Mammary epithelial cell (primary cell): ENCODE measurements at regions of chr1 and their contacts with region 1.

Region 1: DNA sequence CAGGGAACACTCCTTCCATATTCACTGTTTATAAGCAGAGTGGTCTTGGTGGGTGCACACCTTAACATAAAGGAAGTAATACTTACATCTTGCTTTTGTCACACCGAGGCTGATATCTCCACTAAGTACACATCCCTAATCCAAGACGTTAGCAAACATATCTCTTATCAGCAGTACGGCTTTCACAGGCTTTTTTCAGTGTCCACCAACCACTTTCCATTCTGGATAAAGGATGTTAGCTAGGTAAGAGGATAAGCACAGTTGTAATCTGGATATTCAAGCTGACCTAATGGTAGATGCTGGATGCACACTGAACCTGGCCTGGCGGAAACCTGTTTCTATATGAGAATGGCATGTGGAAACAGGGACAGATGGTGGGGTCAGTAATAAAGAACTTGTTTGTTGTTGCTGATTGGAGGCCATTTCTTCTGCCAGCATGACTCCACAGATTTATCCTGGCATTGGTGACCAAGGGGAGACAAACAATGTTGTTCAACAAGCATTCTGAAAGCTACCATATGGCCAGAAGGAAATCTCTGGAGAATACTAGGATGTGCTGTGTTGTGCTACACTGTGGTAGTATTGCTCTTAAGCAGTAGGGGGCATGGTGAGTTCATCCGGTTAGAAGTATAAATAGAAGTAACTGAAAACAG is 416.4 kb downstream of the PTBP2 start:
- DNase-seq: peak; percentile 42
- H3K4me3 ChIP-seq: no peak overlapping the region
- H3K27ac ChIP-seq: no peak overlapping the region
- H3K4me1 ChIP-seq: no peaks in the 10 kb centered on the region
- H3K27me3 ChIP-seq: no peaks in the 10 kb centered on the region
- CTCF ChIP-seq: peak; percentile 80 to 81

Region 2: GRCh38 chr1:96206451-96206850 is 931.5 kb before region 1 on chr1:
- CTCF ChIA-PET with region 1: no interaction called
- dilution Hi-C with region 1: no loop called
- in situ Hi-C with region 1: no loop called
- intact Hi-C with region 1: no loop called
- DNase-seq: no peak
- H3K4me3 ChIP-seq: no peak overlapping the region
- H3K27ac ChIP-seq: no peak overlapping the region
- H3K4me1 ChIP-seq: no peaks in the 10 kb centered on the region
- H3K27me3 ChIP-seq: peaks cover 2% of the 10 kb centered on the region
- CTCF ChIP-seq: no peak

Region 3: GRCh38 chr1:96882091-96882490 is 255.9 kb before region 1 on chr1:
- CTCF ChIA-PET with region 1: no interaction called
- dilution Hi-C with region 1: no loop called
- in situ Hi-C with region 1: no loop called
- intact Hi-C with region 1: no loop called
- DNase-seq: no peak
- H3K4me3 ChIP-seq: no peak overlapping the region
- H3K27ac ChIP-seq: no peak overlapping the region
- H3K4me1 ChIP-seq: no peaks in the 10 kb centered on the region
- H3K27me3 ChIP-seq: no peaks in the 10 kb centered on the region
- CTCF ChIP-seq: no peak

Region 4: GRCh38 chr1:97524211-97524610 is 386.2 kb after region 1 on chr1:
- CTCF ChIA-PET with region 1: interaction called, 6 read pairs
- dilution Hi-C with region 1: no loop called
- in situ Hi-C with region 1: no loop called
- intact Hi-C with region 1: loop called (anchors 5 kb)
- DNase-seq: no peak
- H3K4me3 ChIP-seq: no peak overlapping the region
- H3K27ac ChIP-seq: no peak overlapping the region
- H3K4me1 ChIP-seq: no peaks in the 10 kb centered on the region
- H3K27me3 ChIP-seq: no peaks in the 10 kb centered on the region
- CTCF ChIP-seq: no peak